Activated T-helper 1 cell treated with anti-CD3 and anti-CD28 coated beads, Interleukin-12 subunit alpha, Interleukin-12 subunit beta, Interleukin-2, Interleukin-4 antibody, amounts not matched to agents 30 ng/mL and 10 ng/mL and 1 ng/mL, durations not matched to agents 14 hours and 24 hours and 36 hours (primary cell): ENCODE measurements at regions of chr5 and their contacts with region 1.

Region 1: GRCh38 chr5:33440482-33441240 is at the start of gene TARS1:
- DNase-seq: peak; percentile 93
- H3K4me3 Mint-ChIP-seq: no peak within 1 kb of the TSS
- H3K27ac Mint-ChIP-seq: no peak within 1 kb of the TSS
- H3K4me1 Mint-ChIP-seq: peaks cover 27% of the 10 kb centered on the region
- H3K27me3 Mint-ChIP-seq: no peaks in the 10 kb centered on the region
- total RNA-seq, gene TARS1: 184 and 191 TPM in 2 replicates

Region 2: GRCh38 chr5:32312647-32313523 is 1127.8 kb before region 1 on chr5 and contains the start of gene MTMR12:
- intact Hi-C with region 1: loop called (anchors 2 kb)
- DNase-seq: peak; percentile 100
- H3K4me3 Mint-ChIP-seq: peak within 1 kb of the TSS; percentile 96
- H3K27ac Mint-ChIP-seq: peak within 1 kb of the TSS; percentile 95
- H3K4me1 Mint-ChIP-seq: peaks cover 38% of the 10 kb centered on the region
- H3K27me3 Mint-ChIP-seq: no peaks in the 10 kb centered on the region
- total RNA-seq, gene MTMR12: 26.2 and 29.9 TPM in 2 replicates

Region 3: DNA sequence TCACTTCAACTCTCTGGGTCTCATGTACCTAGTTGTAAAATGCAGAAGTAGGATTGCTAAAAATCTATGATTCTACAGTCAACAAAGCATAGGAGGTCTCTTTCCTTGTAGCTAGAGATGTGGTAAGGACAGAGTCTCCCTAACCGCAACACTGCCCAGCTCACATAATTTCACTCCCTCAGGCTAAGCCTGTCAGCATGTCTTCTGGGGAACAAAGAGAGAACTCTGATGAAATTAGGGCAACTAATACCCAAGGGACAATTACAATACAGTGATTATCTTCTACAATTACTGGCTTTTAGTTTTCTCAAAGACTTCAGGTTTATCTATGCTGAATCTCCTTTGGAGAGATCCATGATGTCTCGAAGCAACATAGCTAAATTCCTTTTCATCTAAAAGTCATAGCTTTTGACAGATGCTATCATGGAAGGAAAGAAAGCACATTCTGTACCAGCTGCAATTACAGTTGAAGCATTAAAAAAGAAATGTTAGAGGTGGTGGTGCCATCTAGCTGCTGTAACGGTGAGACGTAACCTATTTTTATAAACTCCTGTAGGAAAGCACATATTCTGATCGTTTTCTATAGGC is 140.9 kb before region 1 on chr5:
- intact Hi-C with region 1: loop called (anchors 1 kb)
- DNase-seq: no peak
- H3K4me3 Mint-ChIP-seq: no peak overlapping the region
- H3K27ac Mint-ChIP-seq: peak overlapping the region; percentile 24
- H3K4me1 Mint-ChIP-seq: peaks cover 9% of the 10 kb centered on the region
- H3K27me3 Mint-ChIP-seq: peaks cover 3% of the 10 kb centered on the region

Region 4: DNA sequence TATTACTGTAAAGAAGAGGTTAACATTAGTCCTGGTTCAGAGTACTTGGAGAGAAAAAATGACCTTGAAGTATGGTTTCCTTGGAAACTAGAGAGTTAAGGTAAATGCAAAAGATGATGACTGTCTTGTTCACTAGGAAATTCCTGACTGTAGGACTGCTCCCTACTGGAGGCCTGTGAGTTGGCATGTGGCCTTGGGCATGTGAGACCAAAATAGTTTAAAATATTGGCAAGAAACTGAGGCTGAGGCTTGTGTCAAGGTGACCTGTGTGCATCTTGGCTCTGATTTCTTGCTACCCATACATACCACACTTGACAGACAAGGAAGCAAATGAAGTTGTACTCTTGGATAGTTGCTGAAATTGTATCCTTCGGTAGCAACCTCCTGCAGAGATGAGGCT is 96.6 kb after region 1 on chr5:
- intact Hi-C with region 1: no loop called
- DNase-seq: no peak
- H3K4me3 Mint-ChIP-seq: no peak overlapping the region
- H3K27ac Mint-ChIP-seq: no peak overlapping the region
- H3K4me1 Mint-ChIP-seq: no peaks in the 10 kb centered on the region
- H3K27me3 Mint-ChIP-seq: no peaks in the 10 kb centered on the region

Region 5: DNA sequence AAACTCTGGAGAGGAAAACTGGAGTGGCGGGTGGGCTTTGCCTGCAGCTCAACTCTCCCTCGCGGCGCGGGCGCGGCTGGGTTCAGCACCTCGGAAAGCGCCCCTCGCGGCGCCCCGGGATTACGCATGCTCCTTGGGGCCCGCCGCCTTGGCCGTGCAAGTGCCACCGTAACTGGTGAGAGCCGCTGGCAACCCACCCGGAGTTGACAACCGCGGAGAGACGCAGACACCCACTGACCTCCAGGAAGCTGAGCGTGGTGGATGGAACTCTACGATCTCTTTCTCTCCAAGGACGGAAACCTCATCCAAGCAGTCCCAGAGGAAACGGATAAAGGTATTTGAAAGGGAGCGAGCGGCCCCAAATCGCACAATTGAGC is 495.3 kb after region 1 on chr5:
- intact Hi-C with region 1: loop called (anchors 1 kb)
- DNase-seq: peak; percentile 21
- H3K4me3 Mint-ChIP-seq: no peak overlapping the region
- H3K27ac Mint-ChIP-seq: no peak overlapping the region
- H3K4me1 Mint-ChIP-seq: no peaks in the 10 kb centered on the region
- H3K27me3 Mint-ChIP-seq: peaks cover 48% of the 10 kb centered on the region

Region 6: GRCh38 chr5:34464830-34465229 is 1024.2 kb after region 1 on chr5:
- intact Hi-C with region 1: loop called (anchors 5 kb)
- DNase-seq: no peak
- H3K4me3 Mint-ChIP-seq: no peak overlapping the region
- H3K27ac Mint-ChIP-seq: no peak overlapping the region
- H3K4me1 Mint-ChIP-seq: peaks cover 4% of the 10 kb centered on the region
- H3K27me3 Mint-ChIP-seq: peaks cover 4% of the 10 kb centered on the region